ENCODE measurements at regions of chr10 and their contacts with region 1.

Region 1: GRCh38 chr10:11757821-11758463 is 15.8 kb downstream of the ECHDC3 start:
- DNase-seq: peak; percentile 86
- H3K4me3 Mint-ChIP-seq: no peak overlapping the region
- H3K27ac Mint-ChIP-seq: no peak overlapping the region
- H3K4me1 Mint-ChIP-seq: no peaks in the 10 kb centered on the region
- H3K27me3 Mint-ChIP-seq: peaks cover 10% of the 10 kb centered on the region

Region 2: DNA sequence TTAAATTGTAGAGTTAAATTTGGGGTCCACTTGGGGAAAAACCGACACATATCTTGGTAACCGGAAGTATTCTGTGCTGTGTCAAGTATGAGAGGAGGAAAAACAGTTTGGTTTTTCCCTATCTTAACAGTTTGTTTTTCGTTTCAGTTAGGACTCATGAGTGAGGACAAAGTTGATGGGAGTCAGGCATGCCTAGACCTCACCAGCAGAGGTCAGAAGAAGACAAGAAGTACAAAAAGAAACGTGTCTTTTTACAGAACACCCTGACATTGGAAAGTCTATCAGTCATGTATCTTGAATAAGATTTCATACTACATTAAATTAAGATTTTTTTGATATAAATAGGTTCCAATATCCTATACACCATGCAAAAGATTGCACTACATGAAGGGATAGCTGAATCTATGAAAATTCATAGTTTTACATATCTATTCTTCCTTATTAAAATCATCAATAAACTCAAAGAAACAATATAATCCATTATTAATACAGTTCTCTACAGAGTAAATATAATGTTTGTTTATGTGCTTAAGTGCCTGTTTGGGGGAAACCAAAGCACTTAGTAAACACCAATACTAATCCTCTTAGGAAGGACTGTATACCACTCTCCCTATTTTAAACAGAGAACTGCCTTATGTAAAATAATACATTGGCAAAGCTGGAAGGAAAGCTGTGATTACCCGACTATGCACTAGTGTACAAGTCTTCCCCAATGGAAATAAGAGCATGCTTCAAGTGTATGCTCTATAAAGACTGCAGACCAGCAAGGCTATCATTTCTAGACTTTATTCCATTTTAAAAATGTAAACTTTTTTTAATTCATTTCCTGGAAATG is 242.1 kb before region 1 on chr10:
- CTCF ChIA-PET with region 1: interaction called, 71 read pairs
- POLR2A ChIA-PET with region 1: interaction called, 4 read pairs
- DNase-seq: peak; percentile 48
- H3K4me3 Mint-ChIP-seq: no peak overlapping the region
- H3K27ac Mint-ChIP-seq: no peak overlapping the region
- H3K4me1 Mint-ChIP-seq: peaks cover 15% of the 10 kb centered on the region
- H3K27me3 Mint-ChIP-seq: peaks cover 12% of the 10 kb centered on the region

Region 3: GRCh38 chr10:11522821-11523245 is 235.1 kb before region 1 on chr10:
- CTCF ChIA-PET with region 1: interaction called, 47 read pairs
- POLR2A ChIA-PET with region 1: no interaction called
- DNase-seq: no peak
- H3K4me3 Mint-ChIP-seq: no peak overlapping the region
- H3K27ac Mint-ChIP-seq: no peak overlapping the region
- H3K4me1 Mint-ChIP-seq: peaks cover 7% of the 10 kb centered on the region
- H3K27me3 Mint-ChIP-seq: no peaks in the 10 kb centered on the region

Measured in activated CD4-positive, alpha-beta memory T cell treated with anti-CD3 and anti-CD28 coated beads, Interleukin-2, amount 10 ng/mL, durations not matched to agents 7 days and 5 days (primary cell).